H1 (cell line): ENCODE measurements at regions of chr18 and their contacts with region 1.

Region 1: DNA sequence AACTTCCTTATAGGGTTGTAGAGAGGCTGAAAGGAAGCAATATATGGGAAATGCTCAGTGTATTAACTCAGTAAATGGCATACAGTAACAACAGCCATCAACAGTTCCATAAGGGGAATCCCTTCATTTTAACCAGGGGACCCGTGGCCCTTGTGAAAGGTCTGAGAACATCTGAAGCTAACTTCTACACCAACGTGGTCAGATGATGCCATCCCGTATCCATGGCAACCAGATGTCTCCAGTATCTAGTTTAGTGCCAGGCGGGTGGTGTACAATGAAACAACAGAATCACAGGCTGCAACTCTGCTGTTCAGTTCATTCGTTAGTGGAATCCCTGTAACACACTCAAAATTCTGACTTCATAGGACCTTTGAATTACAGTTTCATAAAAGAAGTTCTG is 162.3 kb downstream of the TGIF1 start:
- DNase-seq: no peak
- H3K4me3 ChIP-seq: no peak overlapping the region
- H3K27ac ChIP-seq: no peak overlapping the region
- H3K4me1 ChIP-seq: peaks cover 0 to 11% (median 5%) of the 10 kb centered on the region in 4 experiments; a peak in 6 of 7 replicates
- H3K27me3 ChIP-seq: no peaks in the 10 kb centered on the region
- CTCF ChIP-seq: no peak
- EP300 ChIP-seq: no peak
- POLR2A ChIP-seq: peak in 1 of 2 experiments; percentile 34; a peak in 1 of 3 replicates
- RAD21 ChIP-seq: no peak

Region 2: GRCh38 chr18:3623769-3624545 is 11.6 kb after region 1 on chr18:
- CTCF ChIA-PET with region 1: interaction called, 4 read pairs
- POLR2A ChIA-PET with region 1: interaction called, 11 read pairs
- DNase-seq: peak in 1 of 2 experiments; percentile 65
- H3K4me3 ChIP-seq: no peak overlapping the region
- H3K27ac ChIP-seq: peak overlapping the region; percentile 48; the same call in 1 of the 2 replicates
- H3K4me1 ChIP-seq: peaks cover 9 to 21% (median 11%) of the 10 kb centered on the region in 4 experiments
- H3K27me3 ChIP-seq: no peaks in the 10 kb centered on the region
- CTCF ChIP-seq: no peak
- EP300 ChIP-seq: no peak
- POLR2A ChIP-seq: no peak
- RAD21 ChIP-seq: no peak